ENCODE measurements at regions of chrX and their contacts with region 1.

Region 1: DNA sequence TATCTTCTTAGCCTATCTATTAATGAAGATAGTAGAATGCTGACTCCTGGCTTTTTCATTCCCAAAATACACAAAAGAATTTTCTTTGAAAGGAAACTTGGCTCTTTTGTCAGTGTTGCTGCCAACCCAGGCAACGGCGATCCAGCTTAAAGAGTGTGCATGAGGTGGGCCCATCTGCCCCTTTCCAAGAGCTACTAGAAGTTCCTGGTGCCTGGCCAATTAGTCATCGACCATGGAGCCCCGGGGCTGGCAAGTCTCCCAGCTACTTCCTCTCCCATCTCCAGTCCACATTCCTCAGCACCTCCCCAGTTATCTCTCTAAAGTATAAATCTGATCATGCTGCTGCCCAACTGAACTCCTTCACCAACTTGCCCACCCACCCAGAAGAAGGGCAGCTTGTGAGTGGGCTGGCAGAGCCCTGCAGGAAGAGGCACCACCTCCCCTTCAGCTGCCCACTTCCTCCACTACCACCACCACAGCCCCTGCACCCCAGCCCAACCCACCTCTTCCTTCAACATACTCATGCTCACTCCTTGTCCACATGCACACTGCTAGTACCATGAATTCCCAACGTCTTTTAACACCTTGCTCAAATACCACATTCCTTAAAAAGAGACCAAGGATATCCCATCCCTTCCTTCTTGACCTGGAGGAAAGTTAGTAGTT is 158.2 kb upstream of the MAP3K15 start:
- DNase-seq: peak; percentile 87 to 88
- H3K4me3 ChIP-seq: no peak overlapping the region
- H3K27ac ChIP-seq: peak overlapping the region; percentile 93
- H3K4me1 ChIP-seq: peaks cover 83% of the 10 kb centered on the region
- H3K27me3 ChIP-seq: no peaks in the 10 kb centered on the region
- CTCF ChIP-seq: no peak

Region 2: GRCh38 chrX:19334945-19335626 is 338.4 kb before region 1 on chrX:
- CTCF ChIA-PET with region 1: no interaction called
- POLR2A ChIA-PET with region 1: no interaction called
- intact Hi-C with region 1: no loop called
- DNase-seq: no peak
- H3K4me3 ChIP-seq: no peak overlapping the region
- H3K27ac ChIP-seq: no peak overlapping the region
- H3K4me1 ChIP-seq: no peaks in the 10 kb centered on the region
- H3K27me3 ChIP-seq: peaks cover 26% of the 10 kb centered on the region
- CTCF ChIP-seq: peak; percentile 54

Region 3: DNA sequence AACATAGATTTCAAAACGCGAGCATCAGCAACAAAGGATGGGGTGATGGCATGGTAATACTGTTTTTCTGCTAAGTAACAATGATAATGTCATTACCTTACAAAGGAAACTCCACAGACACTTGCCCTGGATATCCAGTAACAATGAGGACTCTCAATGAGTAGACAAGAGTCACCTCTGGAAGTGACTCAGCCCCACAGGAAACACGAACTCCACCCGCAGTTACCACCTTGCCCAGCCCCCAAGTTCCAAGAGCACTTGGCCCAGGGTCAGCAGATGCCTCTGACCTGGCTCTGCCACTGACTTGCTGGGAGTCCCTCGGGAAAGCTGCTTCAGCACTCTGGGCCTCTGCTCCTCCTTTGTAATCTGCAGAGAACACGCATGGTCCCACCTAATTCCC is 47.9 kb before region 1 on chrX:
- CTCF ChIA-PET with region 1: no interaction called
- POLR2A ChIA-PET with region 1: interaction called, 4 read pairs
- intact Hi-C with region 1: loop called (anchors 2 kb)
- DNase-seq: peak; percentile 46 to 65
- H3K4me3 ChIP-seq: no peak overlapping the region
- H3K27ac ChIP-seq: peak overlapping the region; percentile 89
- H3K4me1 ChIP-seq: peaks cover 63% of the 10 kb centered on the region
- H3K27me3 ChIP-seq: no peaks in the 10 kb centered on the region
- CTCF ChIP-seq: no peak

Region 4: GRCh38 chrX:19709812-19710518 is 36.5 kb after region 1 on chrX:
- CTCF ChIA-PET with region 1: no interaction called
- POLR2A ChIA-PET with region 1: no interaction called
- intact Hi-C with region 1: loop called (anchors 1 kb)
- DNase-seq: peak; percentile 35 to 68
- H3K4me3 ChIP-seq: no peak overlapping the region
- H3K27ac ChIP-seq: peak overlapping the region; percentile 97
- H3K4me1 ChIP-seq: peaks cover 26% of the 10 kb centered on the region
- H3K27me3 ChIP-seq: no peaks in the 10 kb centered on the region
- CTCF ChIP-seq: no peak

Region 5: DNA sequence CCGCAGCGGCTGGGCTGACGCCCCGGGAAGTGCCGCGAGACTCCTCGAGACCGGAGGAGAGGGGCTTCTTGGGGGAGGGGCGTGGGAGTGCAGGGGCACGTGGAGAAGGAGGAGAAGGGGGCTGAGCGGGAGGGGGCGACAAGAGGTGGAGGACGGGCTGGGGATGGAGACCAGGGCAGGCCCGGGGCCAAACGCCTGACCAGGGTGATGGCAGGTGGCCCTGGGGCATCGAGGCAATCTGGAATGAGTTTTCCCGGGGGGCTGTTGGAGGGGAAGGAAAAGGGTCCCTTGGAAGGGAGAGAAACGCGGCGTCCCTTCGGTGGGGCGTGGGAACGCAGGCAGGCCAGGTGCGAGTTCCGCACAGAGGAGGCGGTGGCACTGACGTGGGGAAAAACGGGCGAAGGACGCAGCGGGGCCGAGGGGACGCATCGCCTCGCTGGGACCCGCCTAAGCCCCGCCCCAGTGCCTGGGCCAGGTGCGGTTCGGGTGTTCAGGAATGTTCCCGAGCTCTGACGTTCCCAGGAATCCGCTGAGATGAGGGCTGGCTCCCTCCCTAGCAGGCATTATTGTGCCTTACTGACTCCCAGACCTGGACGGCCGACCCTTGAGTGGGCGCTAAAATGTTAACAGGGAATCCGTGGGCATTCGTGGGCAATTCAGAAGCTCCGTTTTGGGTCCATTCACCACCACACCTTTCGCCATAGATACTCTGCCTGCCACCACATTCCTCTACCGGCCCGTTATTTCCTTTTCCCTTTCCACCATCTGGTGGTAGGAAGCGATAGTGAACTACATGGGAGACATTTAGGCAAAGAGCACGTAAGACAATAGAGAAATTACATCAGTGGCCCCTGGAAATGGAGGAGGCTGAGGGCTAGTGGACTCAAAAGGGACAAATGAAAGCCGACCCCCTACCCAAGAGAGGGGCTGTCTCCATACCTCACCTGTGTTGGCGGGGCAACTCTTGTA is 214.7 kb after region 1 on chrX:
- CTCF ChIA-PET with region 1: interaction called, 10 read pairs
- POLR2A ChIA-PET with region 1: interaction called, 5 read pairs
- intact Hi-C with region 1: loop called (anchors 2 kb)
- DNase-seq: peak; percentile 53 to 70
- H3K4me3 ChIP-seq: peak overlapping the region; percentile 65
- H3K27ac ChIP-seq: peak overlapping the region; percentile 77
- H3K4me1 ChIP-seq: peaks cover 33% of the 10 kb centered on the region
- H3K27me3 ChIP-seq: no peaks in the 10 kb centered on the region
- CTCF ChIP-seq: peak; percentile 60

Measured in PC-9 (cell line).